ENCODE measurements at regions of chr5 and their contacts with region 1.

Region 1: GRCh38 chr5:10761166-10761932 is at the start of gene DAP:
- DNase-seq: peak; percentile 41 to 91
- H3K4me3 ChIP-seq: peak within 1 kb of the TSS; percentile 67 to 96
- H3K27ac ChIP-seq: peak within 1 kb of the TSS; percentile 98 to 99
- H3K4me1 ChIP-seq: peaks cover 7 to 26% of the 10 kb centered on the region in 2 donors
- H3K27me3 ChIP-seq: no peaks in the 10 kb centered on the region
- CTCF ChIP-seq: peak in 1 of 3 experiments; percentile 4
- total RNA-seq, gene DAP: 117 TPM

Region 2: GRCh38 chr5:10249948-10250803 is 511.2 kb before region 1 on chr5 and contains the start of gene CCT5:
- intact Hi-C with region 1: loop called (anchors 10 kb)
- DNase-seq: peak; percentile 69 to 97
- H3K4me3 ChIP-seq: peak within 1 kb of the TSS; percentile 69 to 88
- H3K27ac ChIP-seq: peak within 1 kb of the TSS; percentile 88
- H3K4me1 ChIP-seq: peaks cover 10 to 16% of the 10 kb centered on the region in 2 donors
- H3K27me3 ChIP-seq: no peaks in the 10 kb centered on the region
- CTCF ChIP-seq: no peak
- total RNA-seq, gene CCT5: 66.1 TPM

Region 3: GRCh38 chr5:10452768-10453331 is 308.5 kb before region 1 on chr5:
- intact Hi-C with region 1: loop called (anchors 5 kb)
- DNase-seq: no peak
- H3K4me3 ChIP-seq: no peak overlapping the region
- H3K27ac ChIP-seq: peak overlapping the region in 1 of 2 donors; percentile 1
- H3K4me1 ChIP-seq: peaks cover 0 to 15% of the 10 kb centered on the region in 2 donors
- H3K27me3 ChIP-seq: no peaks in the 10 kb centered on the region
- CTCF ChIP-seq: peak; percentile 63 to 74 (median 70)

Region 4: GRCh38 chr5:10627160-10627701 is 134.1 kb before region 1 on chr5:
- intact Hi-C with region 1: loop called (anchors 5 kb)
- DNase-seq: no peak
- H3K4me3 ChIP-seq: peak overlapping the region; percentile 33 to 63
- H3K27ac ChIP-seq: peak overlapping the region; percentile 70 to 89
- H3K4me1 ChIP-seq: peaks cover 0 to 12% of the 10 kb centered on the region in 2 donors
- H3K27me3 ChIP-seq: no peaks in the 10 kb centered on the region
- CTCF ChIP-seq: no peak

Region 5: GRCh38 chr5:10724799-10725507 is 36.4 kb before region 1 on chr5:
- intact Hi-C with region 1: loop called (anchors 1 kb)
- DNase-seq: peak in 1 of 2 donors; percentile 81
- H3K4me3 ChIP-seq: peak overlapping the region; percentile 31 to 50
- H3K27ac ChIP-seq: peak overlapping the region; percentile 82 to 91
- H3K4me1 ChIP-seq: peaks cover 7 to 26% of the 10 kb centered on the region in 2 donors
- H3K27me3 ChIP-seq: no peaks in the 10 kb centered on the region
- CTCF ChIP-seq: peak; percentile 16 to 48 (median 45)

Measured in ascending aorta (tissue), 2 donors.